ENCODE measurements at regions of chr17 and their contacts with region 1.

Region 1: DNA sequence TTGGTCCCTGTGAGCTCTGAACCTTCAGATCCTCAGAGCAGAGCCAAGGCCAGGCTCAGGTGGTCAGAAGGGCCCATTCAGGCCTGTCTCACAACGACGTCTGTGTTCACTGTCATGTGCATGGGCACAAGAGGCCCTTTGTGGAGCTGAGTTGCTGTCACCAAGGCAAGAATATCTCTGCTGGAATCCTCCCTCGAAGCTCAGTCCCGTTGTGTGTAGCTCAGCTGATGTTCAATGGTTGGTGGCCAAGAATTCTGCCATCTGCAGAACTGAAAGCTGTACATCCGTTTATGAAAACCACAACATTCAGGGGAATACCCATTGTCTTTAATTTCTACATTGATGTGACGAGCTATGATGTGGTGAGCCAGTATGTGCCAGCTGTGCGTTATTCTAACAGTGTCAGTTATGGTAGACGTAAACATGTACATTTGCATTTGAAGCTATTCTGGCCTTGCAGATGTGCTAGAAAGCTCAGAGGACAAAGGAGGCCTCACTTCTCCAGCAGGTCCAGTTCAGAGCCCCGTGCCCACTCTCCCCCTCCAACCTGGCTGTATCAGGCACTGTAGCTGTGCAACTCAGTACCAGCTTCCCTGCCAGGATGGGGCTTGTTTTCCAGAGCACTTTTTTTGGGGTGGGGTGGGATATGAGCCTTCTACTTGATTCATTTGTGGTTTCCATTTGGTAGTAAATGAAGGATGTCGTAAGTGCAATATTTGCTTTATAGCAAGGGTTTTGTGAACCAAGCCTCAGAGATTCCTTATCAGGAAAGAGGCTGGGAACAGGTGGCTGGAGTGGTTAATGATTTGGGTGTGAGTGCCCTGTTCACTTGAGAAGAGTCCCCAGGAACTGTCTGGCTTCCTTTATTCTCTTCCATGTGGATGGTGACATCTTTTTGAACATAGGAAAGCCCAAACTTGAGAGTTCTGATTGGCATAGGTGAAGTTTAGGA is 56.1 kb downstream of the B9D1 start:
- DNase-seq: peak; percentile 37
- H3K4me3 Mint-ChIP-seq: peak overlapping the region; percentile 56
- H3K27ac Mint-ChIP-seq: peak overlapping the region; percentile 15
- H3K4me1 Mint-ChIP-seq: peaks cover 26% of the 10 kb centered on the region
- H3K27me3 Mint-ChIP-seq: peaks cover 27% of the 10 kb centered on the region

Region 2: DNA sequence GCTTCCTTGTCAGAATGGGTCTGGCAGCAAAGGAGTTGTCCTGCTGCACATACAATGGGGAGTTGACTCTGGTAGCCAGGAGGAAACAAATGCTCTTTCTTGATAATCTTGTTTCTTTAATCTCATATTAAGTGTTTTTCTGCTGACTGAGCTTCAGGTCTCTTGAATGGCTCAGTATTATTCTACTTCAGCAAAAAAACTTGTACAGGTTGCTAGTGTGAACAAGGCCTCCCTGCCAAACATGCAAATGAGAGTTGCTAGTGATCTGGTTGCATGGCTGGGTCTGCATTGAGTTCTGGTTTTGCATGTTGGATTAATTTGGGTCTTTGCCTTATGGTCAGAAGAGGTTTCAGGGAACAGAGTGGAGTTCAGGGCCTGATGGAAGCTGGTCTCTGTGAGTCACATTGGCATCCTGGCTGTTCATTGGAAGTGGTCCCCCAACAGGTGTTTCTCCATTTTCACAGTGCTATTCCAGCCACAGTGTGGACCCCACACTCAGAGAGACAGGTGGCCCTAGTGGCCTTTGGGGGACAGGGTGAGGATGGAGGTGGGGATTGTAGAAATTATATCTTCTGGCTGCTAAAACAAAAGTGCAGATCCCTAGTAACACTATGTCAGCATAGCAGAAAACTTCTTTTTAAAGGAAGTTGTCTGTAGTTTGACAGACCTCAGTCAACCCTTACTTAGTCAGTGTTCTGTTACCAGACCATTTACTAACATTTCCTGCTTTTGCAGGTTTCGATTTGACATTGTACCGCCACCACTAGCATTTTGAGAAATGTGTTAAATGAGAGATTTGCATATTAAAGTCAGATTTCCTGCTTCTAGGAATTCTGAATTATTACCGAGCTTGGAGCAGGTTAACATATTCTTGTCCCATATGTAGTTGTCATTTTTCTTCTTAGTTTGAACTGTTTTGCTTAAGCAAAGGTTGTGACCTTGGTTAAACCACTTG is 22.2 kb before region 1 on chr17:
- intact Hi-C with region 1: loop called (anchors 1 kb)
- DNase-seq: no peak
- H3K4me3 Mint-ChIP-seq: peak overlapping the region; percentile 8
- H3K27ac Mint-ChIP-seq: peak overlapping the region; percentile 63
- H3K4me1 Mint-ChIP-seq: peaks cover 28% of the 10 kb centered on the region
- H3K27me3 Mint-ChIP-seq: peaks cover 11% of the 10 kb centered on the region